ENCODE measurements at regions of chr20 and their contacts with region 1.

Region 1: GRCh38 chr20:21352703-21353102 is 44.6 kb downstream of the NKX2-4 start:
- DNase-seq: peak; percentile 14
- ATAC-seq: no peak
- H3K4me3 ChIP-seq: no peak overlapping the region
- H3K27ac ChIP-seq: no peak overlapping the region
- H3K4me1 ChIP-seq: no peaks in the 10 kb centered on the region
- H3K27me3 ChIP-seq: no peaks in the 10 kb centered on the region
- CTCF ChIP-seq: no peak

Region 2: DNA sequence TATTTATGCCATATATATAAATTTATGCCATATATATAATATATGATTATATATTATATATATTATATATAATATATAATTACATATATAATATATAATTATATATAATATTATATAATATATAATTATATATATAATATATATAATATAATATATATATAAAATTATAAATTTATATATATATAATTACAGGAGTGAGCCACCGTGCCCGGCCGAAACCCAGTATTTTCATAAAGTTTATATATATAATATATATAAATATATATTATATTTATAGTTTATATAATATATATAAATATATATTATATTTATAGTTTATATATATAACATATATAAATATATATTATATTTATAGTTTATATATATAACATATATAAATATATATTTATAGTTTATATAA is 13.1 kb after region 1 on chr20:
- CTCF ChIA-PET with region 1: no interaction called
- POLR2A ChIA-PET with region 1: interaction called, 12 read pairs
- intact Hi-C with region 1: no loop called
- DNase-seq: no peak
- ATAC-seq: no peak
- H3K4me3 ChIP-seq: no peak overlapping the region
- H3K27ac ChIP-seq: no peak overlapping the region
- H3K4me1 ChIP-seq: peaks cover 2% of the 10 kb centered on the region; the same call in 1 of the 2 replicates
- H3K27me3 ChIP-seq: no peaks in the 10 kb centered on the region
- CTCF ChIP-seq: no peak

Measured in PC-3 (cell line).